ENCODE measurements at regions of chr2 and their contacts with region 1.

Region 1: GRCh38 chr2:48600204-48600813 is 17.3 kb upstream of the GTF2A1L start:
- DNase-seq: no peak
- ATAC-seq: peak; percentile 47
- H3K4me3 Mint-ChIP-seq: no peak overlapping the region
- H3K27ac Mint-ChIP-seq: no peak overlapping the region
- H3K4me1 Mint-ChIP-seq: no peaks in the 10 kb centered on the region
- H3K27me3 Mint-ChIP-seq: no peaks in the 10 kb centered on the region
- CTCF ChIP-seq: peak; percentile 72

Region 2: DNA sequence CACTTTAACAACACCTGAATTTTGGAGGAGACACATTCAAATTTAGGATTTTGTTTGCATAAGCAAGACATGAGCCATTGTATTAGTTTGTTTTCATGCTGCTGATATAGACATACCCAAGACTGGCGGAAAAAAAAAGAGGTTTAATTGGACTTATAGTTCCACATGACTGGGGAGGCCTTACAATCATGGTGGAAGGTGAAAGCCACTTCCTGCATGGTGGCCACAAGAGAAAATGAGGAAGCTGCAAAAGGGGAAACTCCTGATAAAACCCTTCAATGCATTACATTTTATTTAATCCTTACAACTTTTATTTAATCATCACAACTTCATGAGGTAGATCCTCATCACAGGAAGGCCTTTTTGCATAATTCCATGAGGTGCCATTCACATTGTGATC is 312.3 kb before region 1 on chr2:
- CTCF ChIA-PET with region 1: no interaction called
- POLR2A ChIA-PET with region 1: no interaction called
- intact Hi-C with region 1: no loop called
- DNase-seq: no peak
- ATAC-seq: no peak
- H3K4me3 Mint-ChIP-seq: no peak overlapping the region
- H3K27ac Mint-ChIP-seq: no peak overlapping the region
- H3K4me1 Mint-ChIP-seq: peaks cover 13% of the 10 kb centered on the region
- H3K27me3 Mint-ChIP-seq: no peaks in the 10 kb centered on the region
- CTCF ChIP-seq: no peak

Region 3: DNA sequence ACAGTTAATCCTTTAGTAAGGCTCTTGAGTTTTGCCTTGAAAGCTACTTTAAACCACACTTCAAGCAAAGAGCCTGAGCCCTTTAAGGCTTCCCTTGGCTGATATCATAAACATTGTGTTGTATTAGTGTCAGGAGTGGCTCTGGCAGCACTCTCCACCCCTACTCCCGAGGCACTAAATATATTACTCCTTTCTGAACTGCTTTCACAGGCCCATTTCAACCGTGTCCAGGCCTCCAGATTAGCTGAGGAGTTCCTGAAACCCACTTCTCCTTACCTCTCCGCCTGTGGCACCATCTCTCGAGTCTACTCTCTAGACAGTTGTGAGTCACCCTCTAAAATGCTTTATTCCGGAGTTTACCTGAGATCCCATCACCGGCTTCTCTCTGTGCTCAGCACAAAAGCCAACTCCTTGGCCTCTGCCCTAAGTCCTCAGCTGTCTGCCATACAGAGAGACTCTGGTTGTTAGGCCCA is 84.8 kb before region 1 on chr2:
- CTCF ChIA-PET with region 1: no interaction called
- POLR2A ChIA-PET with region 1: no interaction called
- intact Hi-C with region 1: no loop called
- DNase-seq: no peak
- ATAC-seq: no peak
- H3K4me3 Mint-ChIP-seq: no peak overlapping the region
- H3K27ac Mint-ChIP-seq: no peak overlapping the region
- H3K4me1 Mint-ChIP-seq: no peaks in the 10 kb centered on the region
- H3K27me3 Mint-ChIP-seq: no peaks in the 10 kb centered on the region
- CTCF ChIP-seq: no peak

Region 4: DNA sequence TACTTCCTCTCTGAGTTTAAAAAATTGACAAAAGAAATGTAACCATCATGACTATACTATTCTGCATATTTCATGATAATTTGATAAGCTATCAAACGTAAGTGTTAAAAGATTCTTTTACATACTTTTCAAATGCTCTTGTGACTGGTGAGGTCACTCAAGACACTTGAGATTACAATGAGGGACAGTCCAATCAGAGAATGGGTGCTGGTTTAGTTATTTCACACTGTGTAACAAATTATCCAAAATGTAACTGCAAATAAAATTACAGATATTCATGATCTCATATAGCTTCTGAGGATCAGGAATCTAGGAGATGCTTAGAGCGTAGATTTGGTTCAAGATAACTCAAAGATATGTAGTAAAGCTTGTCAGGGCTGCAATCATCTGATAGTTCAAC is 12.9 kb after region 1 on chr2:
- CTCF ChIA-PET with region 1: interaction called, 10 read pairs
- POLR2A ChIA-PET with region 1: no interaction called
- intact Hi-C with region 1: no loop called
- DNase-seq: no peak
- ATAC-seq: no peak
- H3K4me3 Mint-ChIP-seq: no peak overlapping the region
- H3K27ac Mint-ChIP-seq: no peak overlapping the region
- H3K4me1 Mint-ChIP-seq: no peaks in the 10 kb centered on the region
- H3K27me3 Mint-ChIP-seq: peaks cover 7% of the 10 kb centered on the region
- CTCF ChIP-seq: no peak

Measured in activated CD8-positive, alpha-beta T cell treated with anti-CD3 and anti-CD28 coated beads for 36 hours (primary cell).